Sciatic nerve (tissue), 2 donors: ENCODE measurements at regions of chr15 and their contacts with region 1.

Region 1: DNA sequence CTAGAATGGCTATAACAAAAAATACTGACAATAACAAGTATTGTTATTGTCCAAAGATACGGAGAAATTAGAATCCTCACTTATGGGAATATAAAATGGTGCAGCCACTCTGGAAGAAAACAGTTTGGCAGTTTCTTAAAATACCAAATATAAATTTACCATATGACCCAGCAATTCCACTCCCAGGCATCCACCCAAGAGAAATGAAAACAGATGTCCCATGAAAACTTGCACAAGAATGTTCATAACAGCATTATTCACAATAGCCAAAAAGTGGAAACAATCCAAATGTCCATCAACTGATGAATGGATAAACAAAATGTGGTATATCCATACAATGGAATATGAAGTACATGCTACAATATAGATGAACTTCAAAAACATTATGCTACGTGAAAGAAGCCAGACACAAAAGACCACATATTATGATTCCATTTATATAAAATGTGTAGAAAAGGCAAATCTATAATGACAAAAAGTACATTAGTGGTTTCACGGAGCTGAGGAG is 9.4 kb downstream of the AAGAB start:
- DNase-seq: no peak
- ATAC-seq: no peak

Region 2: DNA sequence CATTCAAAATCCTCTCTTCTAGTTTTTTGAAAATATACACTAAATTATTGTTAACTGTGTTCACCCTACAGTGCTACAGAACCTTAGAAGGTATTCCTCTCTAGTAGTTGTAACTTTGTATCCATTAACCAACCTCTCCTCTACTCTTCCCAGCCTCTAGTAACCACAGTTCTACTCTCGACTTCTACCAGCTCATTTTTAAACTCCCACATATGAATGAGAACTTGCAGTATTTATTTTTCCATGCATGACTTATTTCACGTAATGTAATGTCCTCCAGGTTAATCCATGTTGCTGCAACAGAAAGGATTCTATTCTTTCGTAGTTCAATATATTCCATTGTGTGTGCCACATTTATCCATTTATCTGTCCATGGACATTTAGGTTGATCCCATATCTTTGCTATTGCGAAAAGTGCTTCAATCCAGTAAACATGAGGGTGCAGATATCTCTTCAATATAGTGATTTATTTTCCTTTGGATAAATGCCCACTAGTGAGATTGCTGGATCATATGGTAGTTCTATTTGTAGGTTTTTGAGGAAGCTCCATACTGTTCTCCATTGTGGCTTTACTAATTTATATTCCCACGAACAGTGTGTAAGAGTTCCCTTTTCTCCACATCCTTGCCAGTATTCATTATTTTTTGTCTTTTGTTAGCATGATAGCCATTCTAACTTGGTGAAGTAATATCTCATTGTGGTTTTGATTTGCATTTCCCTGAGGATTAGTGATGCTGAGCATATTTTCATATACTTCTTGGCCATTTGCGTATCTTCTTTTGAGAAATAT is 293.3 kb before region 1 on chr15:
- intact Hi-C with region 1: loop called (anchors 5 kb)
- DNase-seq: no peak
- ATAC-seq: peak; percentile 44

Region 3: GRCh38 chr15:67202991-67203390 is 42.0 kb before region 1 on chr15:
- intact Hi-C with region 1: no loop called
- DNase-seq: no peak
- ATAC-seq: no peak

Region 4: DNA sequence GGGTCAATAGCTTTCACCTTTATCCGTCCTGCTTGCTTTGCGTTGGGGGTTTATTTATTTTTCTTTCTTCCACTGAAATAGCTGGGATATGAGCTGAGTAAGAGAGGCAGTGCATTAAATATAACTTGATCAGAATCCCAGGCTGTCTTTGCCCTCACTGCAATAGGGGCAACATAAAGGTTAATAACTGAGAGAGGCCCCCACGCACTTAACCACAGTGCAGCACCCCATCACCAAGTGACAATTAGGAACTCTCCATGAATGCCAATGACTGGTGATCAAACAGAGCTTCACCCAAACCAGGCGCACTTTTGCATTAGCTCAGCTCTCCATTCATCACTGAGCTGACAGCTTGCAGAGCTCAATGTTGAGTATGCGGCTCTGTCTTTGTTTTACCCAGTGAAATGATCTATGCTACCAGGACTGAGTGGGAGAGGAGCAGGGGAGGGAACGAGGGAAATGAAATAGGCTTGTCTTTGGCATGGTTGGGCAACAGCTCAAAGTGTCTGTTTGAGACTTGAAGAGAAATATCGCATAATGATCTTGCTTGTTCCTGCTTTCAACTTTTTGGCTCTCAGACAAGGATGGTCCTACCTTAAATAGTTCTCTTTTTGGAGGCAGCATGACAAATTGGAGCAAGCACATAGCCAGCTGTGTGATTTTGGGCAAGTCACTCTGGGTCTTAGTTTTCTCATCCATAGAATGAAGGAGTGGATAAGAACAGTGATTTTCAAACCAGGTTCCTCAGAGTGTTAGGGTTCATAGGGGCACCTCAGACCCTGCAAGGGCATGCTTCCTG is 1900.9 kb after region 1 on chr15:
- intact Hi-C with region 1: no loop called
- DNase-seq: no peak
- ATAC-seq: peak; percentile 42